ENCODE measurements at regions of chr10 and their contacts with region 1.

Region 1: GRCh38 chr10:133139551-133140065 is 20.4 kb upstream of the KNDC1 start:
- H3K4me3 Mint-ChIP-seq: no peak overlapping the region
- H3K27ac Mint-ChIP-seq: no peak overlapping the region
- H3K4me1 Mint-ChIP-seq: peaks cover 9% of the 10 kb centered on the region
- H3K27me3 Mint-ChIP-seq: peaks cover 23% of the 10 kb centered on the region

Region 2: GRCh38 chr10:133230387-133231195 is 91.0 kb after region 1 on chr10:
- intact Hi-C with region 1: loop called (anchors 10 kb)
- H3K4me3 Mint-ChIP-seq: peak overlapping the region; percentile 73
- H3K27ac Mint-ChIP-seq: peak overlapping the region; percentile 76
- H3K4me1 Mint-ChIP-seq: peaks cover 29% of the 10 kb centered on the region
- H3K27me3 Mint-ChIP-seq: peaks cover 68% of the 10 kb centered on the region

Region 3: DNA sequence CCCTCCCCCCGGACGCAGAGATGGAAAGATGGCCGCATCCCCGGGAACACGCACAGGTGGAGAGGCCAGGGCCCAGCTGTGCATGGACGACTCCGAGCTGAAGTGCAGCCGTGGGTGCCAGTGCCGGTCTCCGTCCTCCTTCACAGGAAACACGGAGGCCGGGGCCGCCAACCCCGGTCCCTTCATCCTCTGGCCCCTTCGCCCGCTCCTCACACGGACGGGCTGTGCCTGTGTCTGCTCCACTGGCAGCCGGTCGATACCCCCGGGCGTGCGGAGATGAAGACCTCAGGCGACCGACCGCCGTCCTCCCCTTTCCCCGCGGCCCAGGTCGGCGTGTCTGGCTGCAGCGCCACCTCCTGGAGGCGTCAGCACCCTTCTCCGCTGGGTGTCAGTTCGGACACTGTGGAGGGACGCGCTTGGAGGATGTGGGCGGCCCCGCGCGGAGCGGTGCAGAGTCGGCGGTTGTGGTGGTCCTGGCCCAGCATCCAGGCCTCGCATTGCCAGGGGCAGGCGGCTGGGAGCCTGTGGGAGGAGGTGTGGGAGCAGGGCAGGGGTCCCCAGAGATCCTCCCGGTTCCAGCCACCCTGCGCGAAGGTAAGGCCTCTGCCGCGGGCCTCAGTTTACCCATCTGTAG is 179.0 kb after region 1 on chr10:
- intact Hi-C with region 1: loop called (anchors 5 kb)
- H3K4me3 Mint-ChIP-seq: peak overlapping the region; percentile 73
- H3K27ac Mint-ChIP-seq: no peak overlapping the region
- H3K4me1 Mint-ChIP-seq: peaks cover 17% of the 10 kb centered on the region
- H3K27me3 Mint-ChIP-seq: peaks cover 41% of the 10 kb centered on the region

Measured in dendritic cell treated with granulocyte-macrophage colony-stimulating factor and Interleukin-4, amounts not matched to agents 40 ng/mL and 50 ng/mL, for 4 days (primary cell).